ENCODE measurements at regions of chr15 and their contacts with region 1.

Region 1: GRCh38 chr15:69729161-69729748 is 276.6 kb downstream of the RPLP1 start:
- DNase-seq: peak; percentile 87
- ATAC-seq: peak; percentile 42
- H3K4me3 Mint-ChIP-seq: no peak overlapping the region
- H3K27ac Mint-ChIP-seq: peak overlapping the region; percentile 0
- H3K4me1 Mint-ChIP-seq: peaks cover 29% of the 10 kb centered on the region
- H3K27me3 Mint-ChIP-seq: peaks cover 12% of the 10 kb centered on the region

Region 2: GRCh38 chr15:69697916-69698315 is 31.3 kb before region 1 on chr15:
- CTCF ChIA-PET with region 1: no interaction called
- POLR2A ChIA-PET with region 1: no interaction called
- intact Hi-C with region 1: no loop called
- DNase-seq: no peak
- ATAC-seq: no peak
- H3K4me3 Mint-ChIP-seq: no peak overlapping the region
- H3K27ac Mint-ChIP-seq: no peak overlapping the region
- H3K4me1 Mint-ChIP-seq: no peaks in the 10 kb centered on the region
- H3K27me3 Mint-ChIP-seq: no peaks in the 10 kb centered on the region

Region 3: GRCh38 chr15:69743091-69743490 is 13.8 kb after region 1 on chr15:
- CTCF ChIA-PET with region 1: interaction called, 12 read pairs
- POLR2A ChIA-PET with region 1: no interaction called
- intact Hi-C with region 1: no loop called
- DNase-seq: no peak
- ATAC-seq: peak; percentile 83
- H3K4me3 Mint-ChIP-seq: no peak overlapping the region
- H3K27ac Mint-ChIP-seq: no peak overlapping the region
- H3K4me1 Mint-ChIP-seq: peaks cover 24% of the 10 kb centered on the region
- H3K27me3 Mint-ChIP-seq: peaks cover 12% of the 10 kb centered on the region

Region 4: DNA sequence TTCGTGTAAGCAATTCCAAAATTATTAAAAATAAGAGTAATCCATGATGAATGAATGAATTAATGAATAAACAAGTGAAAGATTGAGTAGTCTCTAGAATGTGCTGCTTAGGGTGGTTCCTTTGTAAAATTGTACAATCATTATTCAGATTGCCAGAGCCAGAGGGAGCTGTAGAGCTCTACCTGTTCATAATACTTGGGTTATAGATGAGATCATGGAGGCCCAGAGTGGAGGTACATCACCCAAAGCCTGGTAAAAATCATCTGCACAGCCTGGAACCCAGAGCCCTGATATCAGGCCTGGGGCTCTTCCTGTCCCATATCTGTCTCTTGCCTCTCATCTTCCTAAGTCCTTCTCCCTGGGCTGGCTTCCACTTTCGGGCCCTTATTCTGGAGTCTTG is 20.5 kb after region 1 on chr15:
- CTCF ChIA-PET with region 1: interaction called, 12 read pairs
- POLR2A ChIA-PET with region 1: no interaction called
- intact Hi-C with region 1: no loop called
- DNase-seq: no peak
- ATAC-seq: peak; percentile 79
- H3K4me3 Mint-ChIP-seq: no peak overlapping the region
- H3K27ac Mint-ChIP-seq: peak overlapping the region; percentile 13
- H3K4me1 Mint-ChIP-seq: peaks cover 58% of the 10 kb centered on the region
- H3K27me3 Mint-ChIP-seq: peaks cover 21% of the 10 kb centered on the region

Region 5: GRCh38 chr15:69976366-69976994 is 247.2 kb after region 1 on chr15:
- CTCF ChIA-PET with region 1: interaction called, 3 read pairs
- POLR2A ChIA-PET with region 1: no interaction called
- intact Hi-C with region 1: loop called in 1 of 2 experiments (anchors 5 kb)
- DNase-seq: peak; percentile 80
- ATAC-seq: peak; percentile 92
- H3K4me3 Mint-ChIP-seq: no peak overlapping the region
- H3K27ac Mint-ChIP-seq: no peak overlapping the region
- H3K4me1 Mint-ChIP-seq: no peaks in the 10 kb centered on the region
- H3K27me3 Mint-ChIP-seq: peaks cover 27% of the 10 kb centered on the region

Region 6: DNA sequence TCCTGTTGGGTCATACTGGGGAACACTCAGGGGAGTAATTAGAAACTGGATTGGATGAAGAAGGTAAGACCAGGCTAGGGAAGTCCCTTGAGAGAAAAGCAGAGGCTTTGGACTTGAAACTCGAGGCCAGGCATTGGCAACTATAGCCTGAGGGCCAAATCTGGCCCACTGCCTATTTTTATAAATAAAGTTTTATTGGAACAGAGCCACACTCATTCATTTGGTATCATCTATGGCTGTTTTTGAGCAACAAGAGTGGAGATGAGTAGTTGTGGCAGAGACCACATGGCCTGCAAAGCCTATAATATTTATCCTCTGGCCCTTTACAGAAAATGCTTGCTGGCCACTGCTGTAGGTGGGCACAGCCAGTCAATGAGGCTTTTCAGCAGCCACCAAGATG is 732.7 kb after region 1 on chr15:
- CTCF ChIA-PET with region 1: no interaction called
- POLR2A ChIA-PET with region 1: no interaction called
- intact Hi-C with region 1: loop called (anchors 2 to 10 kb)
- DNase-seq: no peak
- ATAC-seq: no peak
- H3K4me3 Mint-ChIP-seq: no peak overlapping the region
- H3K27ac Mint-ChIP-seq: no peak overlapping the region
- H3K4me1 Mint-ChIP-seq: peaks cover 10% of the 10 kb centered on the region
- H3K27me3 Mint-ChIP-seq: peaks cover 11% of the 10 kb centered on the region

Region 7: DNA sequence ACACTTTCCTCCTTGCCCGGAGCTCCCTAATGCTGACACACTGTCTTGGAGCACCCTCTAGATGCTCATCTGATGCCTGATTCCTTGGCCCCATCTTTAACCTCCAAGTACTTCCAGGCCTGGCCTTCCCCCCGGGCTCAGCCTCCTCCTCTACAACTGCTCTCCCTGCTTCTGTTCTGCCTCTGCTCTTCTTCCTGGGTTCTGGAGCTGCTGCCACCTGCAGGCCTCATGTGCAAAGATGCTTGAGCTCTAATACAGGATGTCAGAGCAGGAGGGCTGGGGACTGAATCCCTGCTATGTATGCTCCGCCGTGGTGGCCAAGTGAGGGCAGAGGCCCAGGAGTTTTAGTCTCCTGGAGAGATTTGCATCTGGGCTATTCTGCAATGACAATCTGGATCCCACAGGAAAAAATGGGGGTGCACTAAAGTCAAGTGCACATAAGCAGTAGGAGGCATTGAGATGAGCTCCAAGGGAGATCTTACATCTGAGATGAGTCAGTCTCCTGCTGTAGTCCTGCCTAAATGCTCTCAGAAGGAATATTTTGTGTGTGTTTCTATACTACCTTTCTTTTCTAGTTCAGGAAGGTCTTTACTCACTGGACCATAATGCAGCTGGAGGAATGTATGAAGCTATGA is 737.8 kb after region 1 on chr15:
- CTCF ChIA-PET with region 1: no interaction called
- POLR2A ChIA-PET with region 1: no interaction called
- intact Hi-C with region 1: loop called in 1 of 2 experiments (anchors 10 kb)
- DNase-seq: peak; percentile 71
- ATAC-seq: peak; percentile 89
- H3K4me3 Mint-ChIP-seq: no peak overlapping the region
- H3K27ac Mint-ChIP-seq: no peak overlapping the region
- H3K4me1 Mint-ChIP-seq: peaks cover 2% of the 10 kb centered on the region
- H3K27me3 Mint-ChIP-seq: peaks cover 20% of the 10 kb centered on the region